ENCODE measurements at regions of chr22 and their contacts with region 1.

Region 1: GRCh38 chr22:28600546-28601143 is 79.0 kb downstream of the TTC28 start:
- DNase-seq: peak; percentile 5 to 48 (median 19)
- ATAC-seq: peak; percentile 57
- H3K4me3 ChIP-seq: no peak overlapping the region
- H3K27ac ChIP-seq: no peak overlapping the region
- H3K4me1 ChIP-seq: no peaks in the 10 kb centered on the region
- H3K27me3 ChIP-seq: no peaks in the 10 kb centered on the region
- CTCF ChIP-seq: peak; percentile 20 to 62 (median 36); a peak in 4 of 6 replicates
- EP300 ChIP-seq: no peak
- POLR2A ChIP-seq: no peak
- RAD21 ChIP-seq: peak; percentile 74 to 84

Region 2: DNA sequence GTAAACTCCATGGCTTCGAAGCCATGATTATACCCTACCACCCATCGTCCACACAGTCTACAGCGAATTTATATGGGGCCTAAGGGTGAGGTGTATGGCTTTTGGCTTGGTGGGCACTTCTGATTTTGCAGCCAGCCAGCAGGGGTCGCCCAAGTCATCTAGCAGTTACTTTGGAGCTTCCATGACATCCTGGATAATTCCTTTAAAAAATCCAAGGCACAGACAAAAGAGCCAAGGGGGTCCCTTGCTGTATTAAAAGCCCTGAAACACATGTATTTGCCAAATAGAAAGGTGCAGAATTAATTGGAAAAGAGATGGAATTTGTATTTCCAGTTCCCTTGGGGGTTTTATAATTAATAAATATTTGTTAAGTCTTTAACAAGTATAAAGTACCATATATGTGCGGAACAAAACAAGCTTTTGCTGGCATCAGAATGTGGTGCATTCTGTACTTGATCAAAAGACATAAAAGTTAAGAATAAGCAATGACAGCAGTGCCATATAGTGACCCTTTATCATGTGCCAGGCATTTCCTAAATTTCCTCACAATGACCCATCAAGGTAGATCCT is 548.8 kb before region 1 on chr22:
- CTCF ChIA-PET with region 1: interaction called, 29 read pairs
- POLR2A ChIA-PET with region 1: no interaction called
- in situ Hi-C with region 1: loop called (anchors 5 kb)
- intact Hi-C with region 1: no loop called
- DNase-seq: peak; percentile 29 to 63 (median 42)
- ATAC-seq: peak; percentile 61; the same call in 2 of the 3 replicates
- H3K4me3 ChIP-seq: no peak overlapping the region
- H3K27ac ChIP-seq: no peak overlapping the region
- H3K4me1 ChIP-seq: no peaks in the 10 kb centered on the region; a peak in 2 of 5 replicates
- H3K27me3 ChIP-seq: no peaks in the 10 kb centered on the region
- CTCF ChIP-seq: peak; percentile 64 to 79 (median 75)
- EP300 ChIP-seq: no peak
- POLR2A ChIP-seq: no peak
- RAD21 ChIP-seq: peak; percentile 68 to 77

Region 3: DNA sequence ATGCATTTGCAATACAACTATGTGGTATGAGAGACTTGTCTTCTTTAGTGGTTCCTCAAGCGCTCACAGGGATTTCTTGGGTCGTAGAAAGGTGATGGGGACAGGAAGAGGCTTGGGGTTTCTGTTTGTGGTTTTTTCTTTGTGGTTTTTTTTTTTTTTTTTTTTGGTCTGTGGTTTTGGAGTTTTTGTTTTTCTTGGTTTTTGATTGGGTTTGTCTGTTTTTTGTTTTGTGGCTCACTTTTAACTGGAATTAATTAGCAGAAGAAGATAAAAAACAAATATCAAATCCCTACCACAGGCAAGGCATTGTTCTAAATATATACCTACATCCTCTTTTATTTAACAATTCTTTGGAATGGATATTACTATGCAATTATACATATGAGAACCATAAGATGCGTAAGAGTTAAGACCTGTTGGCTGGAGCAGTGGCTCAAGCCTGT is 73.5 kb after region 1 on chr22:
- CTCF ChIA-PET with region 1: no interaction called
- POLR2A ChIA-PET with region 1: no interaction called
- in situ Hi-C with region 1: no loop called
- intact Hi-C with region 1: loop called (anchors 10 kb)
- DNase-seq: peak in 2 of 4 experiments; percentile 32 to 57
- ATAC-seq: peak; percentile 78
- H3K4me3 ChIP-seq: no peak overlapping the region
- H3K27ac ChIP-seq: peak overlapping the region; percentile 60; the same call in 1 of the 3 replicates
- H3K4me1 ChIP-seq: peaks cover 2 to 3% of the 10 kb centered on the region in 2 experiments; a peak in 2 of 5 replicates
- H3K27me3 ChIP-seq: no peaks in the 10 kb centered on the region
- CTCF ChIP-seq: no peak
- EP300 ChIP-seq: peak; percentile 72
- POLR2A ChIP-seq: no peak
- RAD21 ChIP-seq: no peak

Region 4: DNA sequence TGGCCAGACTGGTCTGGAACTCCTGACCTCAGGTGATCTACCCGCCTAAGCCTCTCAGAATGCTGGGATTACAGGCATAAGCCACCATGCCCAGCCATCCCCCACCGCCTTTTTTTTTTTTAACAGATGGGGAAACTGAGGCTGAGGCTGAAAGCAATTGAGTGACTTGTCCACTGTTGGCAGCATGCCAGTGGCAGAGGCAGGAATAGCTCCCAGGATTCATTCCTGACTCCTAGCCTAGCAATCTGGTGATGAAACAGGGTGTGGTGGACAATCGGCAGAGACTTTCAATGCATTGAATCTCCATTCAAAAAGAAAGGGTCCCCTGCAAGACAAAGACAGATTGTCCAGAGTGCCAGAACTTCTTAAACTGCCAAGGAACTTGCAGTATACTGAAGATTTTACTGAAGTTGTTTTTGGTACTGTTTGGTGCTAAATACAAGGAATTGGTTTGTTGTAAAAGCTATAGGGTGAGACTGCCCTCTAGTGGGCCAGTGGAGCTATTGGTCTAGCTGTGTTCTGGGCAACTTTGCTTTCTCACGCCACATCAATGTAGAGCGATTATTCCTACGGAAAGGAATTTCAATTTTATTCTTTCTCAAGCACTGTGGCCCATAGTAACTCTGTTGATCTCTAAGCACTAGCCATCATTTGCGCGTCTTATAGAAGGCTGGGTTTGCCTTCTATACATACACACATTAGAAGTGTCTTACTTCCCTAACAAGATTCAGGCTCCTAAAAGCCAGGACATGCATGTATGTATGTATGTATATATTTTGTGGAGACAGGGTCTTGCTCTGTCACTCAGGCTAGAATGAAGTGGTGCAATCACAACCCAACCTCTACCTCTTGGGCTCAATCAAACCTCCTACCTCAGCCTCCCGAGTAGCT is 440.0 kb after region 1 on chr22:
- CTCF ChIA-PET with region 1: interaction called, 8 read pairs
- POLR2A ChIA-PET with region 1: no interaction called
- in situ Hi-C with region 1: loop called (anchors 5 kb)
- intact Hi-C with region 1: loop called (anchors 5 kb)
- DNase-seq: peak; percentile 45 to 77 (median 50)
- ATAC-seq: peak; percentile 88
- H3K4me3 ChIP-seq: no peak overlapping the region
- H3K27ac ChIP-seq: no peak overlapping the region
- H3K4me1 ChIP-seq: no peaks in the 10 kb centered on the region; a peak in 1 of 5 replicates
- H3K27me3 ChIP-seq: no peaks in the 10 kb centered on the region
- CTCF ChIP-seq: peak; percentile 74 to 82 (median 81)
- EP300 ChIP-seq: no peak
- POLR2A ChIP-seq: no peak
- RAD21 ChIP-seq: peak; percentile 76 to 88

Measured in K562 (cell line).